Pancreas (tissue), 10 donors: ENCODE measurements at regions of chr9 and their contacts with region 1.

Region 1: GRCh38 chr9:118992813-118993794 is 376.1 kb downstream of the BRINP1 start:
- DNase-seq: no peak
- ATAC-seq: no peak
- H3K4me3 ChIP-seq: no peak overlapping the region
- H3K27ac ChIP-seq: no peak overlapping the region
- H3K4me1 ChIP-seq: no peaks in the 10 kb centered on the region
- H3K27me3 ChIP-seq: peaks cover 0 to under 1% (median 0%) of the 10 kb centered on the region in 4 donors
- CTCF ChIP-seq: no peak

Region 2: DNA sequence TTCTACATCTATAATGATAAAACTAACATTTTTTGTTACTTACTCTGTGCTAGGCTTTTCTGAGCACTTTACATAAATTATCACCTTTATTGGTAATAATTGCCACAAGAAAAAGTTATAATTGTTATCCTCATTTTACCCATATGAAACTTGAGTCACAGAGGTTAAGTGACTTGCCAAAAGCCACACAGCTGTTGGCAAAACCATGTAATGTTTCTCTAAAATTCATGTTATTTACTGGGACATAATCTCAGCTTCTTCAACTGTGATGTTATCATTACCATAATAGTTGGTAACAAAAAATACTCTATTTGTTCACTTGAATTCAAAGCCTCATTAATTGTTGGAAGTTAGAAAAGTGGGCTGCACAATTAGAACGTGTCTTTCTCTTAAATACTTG is 61.2 kb before region 1 on chr9:
- intact Hi-C with region 1: loop called in 1 of 3 experiments (anchors 10 kb)
- DNase-seq: no peak
- ATAC-seq: no peak
- H3K4me3 ChIP-seq: no peak overlapping the region
- H3K27ac ChIP-seq: no peak overlapping the region
- H3K4me1 ChIP-seq: no peaks in the 10 kb centered on the region
- H3K27me3 ChIP-seq: no peaks in the 10 kb centered on the region
- CTCF ChIP-seq: no peak